Left lung (tissue), 14 donors: ENCODE measurements at regions of chr3 and their contacts with region 1.

Region 1: GRCh38 chr3:128497387-128498126 is 4.6 kb upstream of the GATA2 start:
- DNase-seq: peak in 3 of 4 donors; percentile 50 to 89 (median 71)
- ATAC-seq: peak; percentile 80
- H3K4me3 ChIP-seq: peak overlapping the region; percentile 46
- H3K27ac ChIP-seq: peak overlapping the region in 1 of 2 donors; percentile 48
- H3K4me1 ChIP-seq: peaks cover 9 to 33% of the 10 kb centered on the region in 2 donors
- H3K27me3 ChIP-seq: peaks cover 39 to 83% of the 10 kb centered on the region in 2 donors
- CTCF ChIP-seq: peak; percentile 65 to 73

Region 2: GRCh38 chr3:128170805-128171516 is 326.6 kb before region 1 on chr3:
- intact Hi-C with region 1: loop called in 1 of 2 experiments (anchors 10 kb)
- DNase-seq: peak in 2 of 4 donors; percentile 69 to 86
- ATAC-seq: peak; percentile 79
- H3K4me3 ChIP-seq: no peak overlapping the region
- H3K27ac ChIP-seq: no peak overlapping the region
- H3K4me1 ChIP-seq: peaks cover 5 to 37% of the 10 kb centered on the region in 2 donors
- H3K27me3 ChIP-seq: no peaks in the 10 kb centered on the region
- CTCF ChIP-seq: peak; percentile 48 to 59

Region 3: DNA sequence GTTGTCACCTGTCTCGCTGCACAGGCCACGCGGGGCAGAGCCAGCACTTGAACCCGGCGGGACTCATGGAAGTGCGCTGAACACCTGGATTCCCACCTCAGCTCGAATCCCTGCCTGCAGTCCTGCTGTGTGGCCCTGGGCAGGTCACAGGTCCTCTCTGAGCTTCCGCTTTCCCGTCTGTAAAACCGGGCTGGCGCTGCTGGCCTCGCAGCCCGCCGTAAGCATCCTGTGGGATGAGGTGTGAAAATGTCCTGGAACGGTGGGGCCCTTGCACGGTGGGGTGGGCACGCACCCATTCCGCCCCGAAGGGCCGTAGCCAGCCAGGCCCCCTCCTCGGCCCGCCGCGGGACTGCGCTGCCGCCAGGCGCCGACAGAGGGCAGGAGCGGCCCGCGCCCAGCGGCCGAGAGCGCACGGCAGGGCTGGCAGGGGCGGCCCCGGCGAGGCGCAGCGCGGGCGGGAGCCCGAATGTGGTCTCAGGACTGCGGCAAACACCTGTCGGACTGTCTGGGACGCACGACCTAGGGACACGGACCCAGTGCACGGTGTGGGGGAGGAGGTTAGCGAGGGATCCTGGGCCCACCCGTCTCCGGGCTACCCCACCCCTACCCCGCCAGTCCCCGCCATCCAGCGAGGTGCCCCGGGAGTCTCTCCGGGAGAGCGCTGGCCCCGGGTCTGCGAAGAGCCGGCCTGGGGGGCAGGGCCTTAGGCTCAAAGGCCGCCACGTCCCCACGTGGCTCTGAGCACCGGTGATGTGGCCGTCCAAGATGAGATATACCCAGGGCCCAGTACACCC is 71.2 kb before region 1 on chr3:
- intact Hi-C with region 1: loop called in 1 of 2 experiments (anchors 5 kb)
- DNase-seq: peak; percentile 39 to 94 (median 50)
- ATAC-seq: peak; percentile 98
- H3K4me3 ChIP-seq: peak overlapping the region in 1 of 2 donors; percentile 21
- H3K27ac ChIP-seq: no peak overlapping the region
- H3K4me1 ChIP-seq: peaks cover 0 to 9% of the 10 kb centered on the region in 2 donors
- H3K27me3 ChIP-seq: peaks cover 0 to 49% of the 10 kb centered on the region in 2 donors
- CTCF ChIP-seq: peak; percentile 87 to 95